ENCODE measurements at regions of chr6 and their contacts with region 1.

Region 1: DNA sequence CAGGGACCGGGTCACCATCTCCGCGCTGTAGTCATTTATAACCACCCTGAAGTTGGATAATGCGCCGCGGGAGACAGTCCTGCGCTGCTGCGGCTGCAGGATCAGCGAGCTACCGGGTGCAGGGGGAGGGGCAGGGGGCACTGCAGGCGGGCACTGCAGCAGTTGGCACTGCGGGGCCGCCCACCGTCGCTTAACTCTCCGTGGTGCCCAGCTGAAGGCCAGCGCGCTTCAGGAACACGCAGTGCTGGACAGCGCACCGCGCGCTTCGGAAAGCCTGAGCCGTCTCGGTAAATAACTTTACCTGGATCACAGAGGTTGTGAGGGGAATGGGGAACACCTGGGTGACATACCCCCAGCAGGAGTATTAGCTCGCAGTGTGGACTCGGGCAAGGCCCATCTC is 12.4 kb upstream of the LRFN2 start:
- DNase-seq: no peak
- ATAC-seq: no peak
- H3K4me3 ChIP-seq: no peak overlapping the region
- H3K27ac ChIP-seq: no peak overlapping the region
- H3K4me1 ChIP-seq: no peaks in the 10 kb centered on the region
- H3K27me3 ChIP-seq: peaks cover 10% of the 10 kb centered on the region
- CTCF ChIP-seq: no peak

Region 2: DNA sequence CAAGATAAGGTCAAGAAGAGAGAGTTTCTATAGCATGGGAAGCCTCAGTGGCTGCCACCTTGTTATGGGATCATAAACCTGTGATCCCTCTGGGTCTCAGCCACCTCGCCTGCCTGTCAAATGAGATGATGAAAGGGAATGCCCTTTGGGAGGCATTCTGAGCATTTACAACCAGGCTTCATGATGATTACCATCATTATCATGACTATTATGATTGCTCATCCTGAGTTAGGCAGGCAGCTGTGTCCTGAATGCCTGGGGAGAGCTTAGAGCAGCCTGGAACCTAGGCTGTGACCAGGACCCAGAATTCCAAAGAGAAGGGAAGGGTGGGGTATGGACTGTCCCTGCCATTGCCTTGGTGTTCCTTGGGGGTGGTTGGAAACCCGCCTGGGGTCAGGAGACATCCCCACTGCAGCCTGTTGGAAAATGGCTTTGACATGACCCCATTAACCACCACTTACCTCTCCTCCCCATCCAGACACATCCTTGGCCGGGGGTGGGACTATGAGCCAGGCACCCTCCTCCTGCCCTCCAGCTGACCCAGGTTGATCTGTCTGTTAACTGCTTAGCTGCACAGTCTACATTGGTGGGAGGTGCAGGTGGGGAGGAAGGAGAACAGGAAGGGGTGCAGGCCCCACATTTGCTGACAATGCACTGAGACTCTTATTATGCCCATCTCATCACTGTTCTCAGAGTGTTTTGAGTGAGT is 64.3 kb before region 1 on chr6:
- CTCF ChIA-PET with region 1: no interaction called
- POLR2A ChIA-PET with region 1: no interaction called
- in situ Hi-C with region 1: no loop called
- intact Hi-C with region 1: no loop called
- DNase-seq: no peak
- ATAC-seq: no peak
- H3K4me3 ChIP-seq: no peak overlapping the region
- H3K27ac ChIP-seq: no peak overlapping the region
- H3K4me1 ChIP-seq: no peaks in the 10 kb centered on the region
- H3K27me3 ChIP-seq: no peaks in the 10 kb centered on the region; the same call in 1 of the 2 replicates
- CTCF ChIP-seq: no peak

Region 3: GRCh38 chr6:40550202-40551101 is 49.1 kb before region 1 on chr6:
- CTCF ChIA-PET with region 1: no interaction called
- POLR2A ChIA-PET with region 1: no interaction called
- in situ Hi-C with region 1: no loop called
- intact Hi-C with region 1: no loop called
- DNase-seq: peak; percentile 10
- ATAC-seq: no peak
- H3K4me3 ChIP-seq: no peak overlapping the region
- H3K27ac ChIP-seq: no peak overlapping the region
- H3K4me1 ChIP-seq: no peaks in the 10 kb centered on the region
- H3K27me3 ChIP-seq: peaks cover 7% of the 10 kb centered on the region
- CTCF ChIP-seq: peak; percentile 74

Region 4: DNA sequence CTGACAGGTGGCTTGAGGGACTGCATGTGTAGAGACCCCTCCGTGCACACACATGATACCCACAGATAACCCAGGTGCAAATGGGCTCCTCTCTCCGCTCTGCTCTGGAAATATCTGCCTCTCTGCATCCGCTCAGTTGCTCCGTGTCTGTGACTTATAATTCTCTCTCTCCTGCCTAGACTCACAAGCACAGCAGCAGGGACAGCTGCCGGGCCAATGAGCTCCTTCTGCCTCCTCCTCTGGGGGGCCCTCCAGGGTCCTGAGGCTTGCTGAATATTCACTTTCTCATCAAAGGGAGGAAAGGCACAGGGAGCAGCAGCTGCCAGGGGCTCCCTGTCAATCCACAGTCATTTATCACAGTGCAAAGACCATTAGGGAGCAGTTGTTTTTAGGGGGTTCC is 36.4 kb before region 1 on chr6:
- CTCF ChIA-PET with region 1: interaction called, 10 read pairs
- POLR2A ChIA-PET with region 1: no interaction called
- in situ Hi-C with region 1: no loop called
- intact Hi-C with region 1: no loop called
- DNase-seq: no peak
- ATAC-seq: no peak
- H3K4me3 ChIP-seq: no peak overlapping the region
- H3K27ac ChIP-seq: no peak overlapping the region
- H3K4me1 ChIP-seq: no peaks in the 10 kb centered on the region
- H3K27me3 ChIP-seq: peaks cover 2% of the 10 kb centered on the region; the same call in 1 of the 2 replicates
- CTCF ChIP-seq: no peak

Region 5: GRCh38 chr6:40577672-40578071 is 21.9 kb before region 1 on chr6:
- CTCF ChIA-PET with region 1: interaction called, 11 read pairs
- POLR2A ChIA-PET with region 1: interaction called, 3 read pairs
- in situ Hi-C with region 1: no loop called
- intact Hi-C with region 1: no loop called
- DNase-seq: no peak
- ATAC-seq: no peak
- H3K4me3 ChIP-seq: no peak overlapping the region
- H3K27ac ChIP-seq: no peak overlapping the region
- H3K4me1 ChIP-seq: no peaks in the 10 kb centered on the region
- H3K27me3 ChIP-seq: no peaks in the 10 kb centered on the region; the same call in 1 of the 2 replicates
- CTCF ChIP-seq: no peak

Measured in Panc1 (cell line).